ENCODE measurements at regions of chr1 and their contacts with region 1.

Region 1: GRCh38 chr1:16055613-16056520 is 12.3 kb downstream of the CLCNKB start:
- DNase-seq: peak; percentile 61 to 81
- ATAC-seq: peak; percentile 80 to 91
- H3K4me3 ChIP-seq: no peak overlapping the region
- H3K27ac ChIP-seq: no peak overlapping the region
- H3K4me1 ChIP-seq: no peaks in the 10 kb centered on the region
- H3K27me3 ChIP-seq: no peaks in the 10 kb centered on the region
- CTCF ChIP-seq: peak; percentile 80 to 99 (median 97)
- POLR2A ChIP-seq: no peak

Region 2: GRCh38 chr1:15788624-15789301 is 267.1 kb before region 1 on chr1:
- in situ Hi-C with region 1: no loop called
- intact Hi-C with region 1: loop called (anchors 1 kb)
- DNase-seq: no peak
- ATAC-seq: no peak
- H3K4me3 ChIP-seq: no peak overlapping the region
- H3K27ac ChIP-seq: no peak overlapping the region
- H3K4me1 ChIP-seq: peaks cover 0 to 9% of the 10 kb centered on the region in 2 donors
- H3K27me3 ChIP-seq: no peaks in the 10 kb centered on the region
- CTCF ChIP-seq: no peak
- POLR2A ChIP-seq: no peak

Region 3: DNA sequence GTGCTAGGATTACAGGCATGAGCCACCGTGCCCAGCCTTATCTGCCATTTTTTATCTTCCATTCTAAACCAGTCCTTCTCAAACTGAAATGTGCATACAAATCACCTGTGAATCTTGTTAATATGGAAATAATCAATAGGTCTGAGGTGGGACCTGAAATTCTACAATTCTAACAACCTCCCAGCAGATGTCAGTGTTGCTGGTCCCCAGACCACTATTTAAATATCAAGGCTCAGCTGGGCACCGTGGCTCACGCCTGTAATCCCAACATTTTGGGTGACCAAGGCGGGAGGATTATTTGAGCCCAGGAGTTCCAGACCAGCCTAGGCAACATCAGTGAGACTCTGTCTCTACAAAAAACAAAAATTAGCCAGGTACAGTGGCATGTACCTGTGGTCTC is 252.5 kb before region 1 on chr1:
- in situ Hi-C with region 1: loop called in 1 of 4 experiments (anchors 25 kb)
- intact Hi-C with region 1: no loop called
- DNase-seq: no peak
- ATAC-seq: no peak
- H3K4me3 ChIP-seq: no peak overlapping the region
- H3K27ac ChIP-seq: no peak overlapping the region
- H3K4me1 ChIP-seq: peaks cover 10 to 17% of the 10 kb centered on the region in 2 donors
- H3K27me3 ChIP-seq: no peaks in the 10 kb centered on the region
- CTCF ChIP-seq: peak in 3 of 5 experiments; percentile 26 to 33 (median 29)
- POLR2A ChIP-seq: no peak

Region 4: GRCh38 chr1:16009030-16009709 is 46.7 kb before region 1 on chr1:
- in situ Hi-C with region 1: loop called in 2 of 4 experiments (anchors 10 kb)
- intact Hi-C with region 1: loop called (anchors 1 kb)
- DNase-seq: peak; percentile 59 to 84
- ATAC-seq: peak; percentile 15 to 17
- H3K4me3 ChIP-seq: no peak overlapping the region
- H3K27ac ChIP-seq: peak overlapping the region in 3 of 4 donors; percentile 12 to 100 (median 97)
- H3K4me1 ChIP-seq: peaks cover 13 to 18% of the 10 kb centered on the region in 2 donors
- H3K27me3 ChIP-seq: no peaks in the 10 kb centered on the region
- CTCF ChIP-seq: peak; percentile 95 to 99 (median 99)
- POLR2A ChIP-seq: peak in 1 of 2 donors; percentile 28

Region 5: DNA sequence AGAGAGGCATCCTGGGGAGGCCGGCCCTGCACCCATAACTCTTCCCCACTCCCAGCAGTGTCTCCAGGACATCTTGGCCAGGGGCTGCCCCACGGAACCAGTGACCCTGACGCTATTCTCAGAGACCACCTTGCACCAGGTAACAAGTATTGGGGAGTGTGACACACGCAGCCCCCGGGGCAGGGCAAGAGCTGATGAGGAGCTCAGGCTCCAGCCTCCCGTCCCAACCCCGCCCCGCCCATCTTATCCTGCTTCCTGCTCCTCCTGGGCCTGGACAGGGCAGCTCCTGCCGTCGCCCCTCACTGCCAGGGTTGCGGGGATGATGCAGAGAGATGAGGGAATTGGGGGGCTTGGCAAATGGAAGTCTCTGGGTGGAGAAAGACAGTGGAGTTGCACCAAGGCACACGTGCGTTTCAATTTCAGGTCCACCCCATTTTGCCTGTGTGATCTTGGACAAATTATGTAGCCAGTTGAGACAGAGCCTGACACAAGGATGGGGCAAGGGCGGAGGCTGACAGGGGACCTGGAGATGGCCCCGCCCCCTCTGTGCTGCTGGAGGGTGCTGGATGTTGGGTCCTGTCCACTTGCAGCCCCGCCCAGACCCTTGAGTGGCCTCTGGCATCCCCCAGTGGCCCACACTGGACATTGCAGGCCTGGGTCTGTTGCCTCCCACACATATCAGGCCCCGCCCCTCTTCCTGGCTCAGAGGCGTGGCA is 23.3 kb before region 1 on chr1:
- in situ Hi-C with region 1: no loop called
- intact Hi-C with region 1: loop called (anchors 1 kb)
- DNase-seq: peak; percentile 76 to 94
- ATAC-seq: peak; percentile 89 to 91
- H3K4me3 ChIP-seq: no peak overlapping the region
- H3K27ac ChIP-seq: peak overlapping the region in 2 of 4 donors; percentile 12 to 19
- H3K4me1 ChIP-seq: peaks cover 5 to 6% of the 10 kb centered on the region in 2 donors
- H3K27me3 ChIP-seq: no peaks in the 10 kb centered on the region
- CTCF ChIP-seq: peak; percentile 96 to 100 (median 100)
- POLR2A ChIP-seq: no peak

Region 6: DNA sequence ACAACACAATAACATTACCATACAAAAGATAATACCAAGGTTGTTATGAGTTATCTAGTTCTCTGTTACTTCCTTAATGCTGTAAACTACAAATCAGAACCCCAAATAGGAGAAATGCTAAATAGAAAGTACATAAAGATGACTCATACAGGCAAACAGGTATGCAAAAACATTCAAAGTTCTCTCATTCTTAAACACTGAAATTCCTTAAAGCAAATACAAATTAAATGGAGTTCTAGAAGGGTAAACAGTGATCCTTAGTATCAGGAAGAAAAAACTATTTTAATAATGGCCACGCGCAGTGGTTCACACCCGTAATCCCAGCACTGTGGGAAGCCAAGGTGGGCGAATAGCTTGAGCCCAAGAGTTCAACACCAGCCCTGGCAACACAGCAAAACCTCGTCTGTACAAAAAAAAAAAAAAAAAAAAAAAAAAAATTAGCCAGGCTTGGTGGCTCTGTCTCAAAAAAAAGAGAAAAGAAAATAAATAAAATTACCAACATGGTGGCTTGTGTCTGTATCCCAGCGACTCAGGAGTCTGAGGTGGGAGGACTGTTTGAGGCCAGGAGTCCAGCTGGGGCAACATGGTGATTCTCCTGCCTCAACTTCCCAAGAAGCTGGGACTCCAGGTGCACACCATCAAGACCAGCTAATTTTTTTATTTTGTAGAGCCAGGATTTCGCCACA is 278.9 kb after region 1 on chr1:
- in situ Hi-C with region 1: no loop called
- intact Hi-C with region 1: no loop called
- DNase-seq: no peak
- ATAC-seq: no peak
- H3K4me3 ChIP-seq: no peak overlapping the region
- H3K27ac ChIP-seq: peak overlapping the region in 1 of 4 donors; percentile 29
- H3K4me1 ChIP-seq: peaks cover 17 to 28% of the 10 kb centered on the region in 2 donors
- H3K27me3 ChIP-seq: no peaks in the 10 kb centered on the region
- CTCF ChIP-seq: no peak
- POLR2A ChIP-seq: no peak